ENCODE measurements at regions of chr15 and their contacts with region 1.

Region 1: DNA sequence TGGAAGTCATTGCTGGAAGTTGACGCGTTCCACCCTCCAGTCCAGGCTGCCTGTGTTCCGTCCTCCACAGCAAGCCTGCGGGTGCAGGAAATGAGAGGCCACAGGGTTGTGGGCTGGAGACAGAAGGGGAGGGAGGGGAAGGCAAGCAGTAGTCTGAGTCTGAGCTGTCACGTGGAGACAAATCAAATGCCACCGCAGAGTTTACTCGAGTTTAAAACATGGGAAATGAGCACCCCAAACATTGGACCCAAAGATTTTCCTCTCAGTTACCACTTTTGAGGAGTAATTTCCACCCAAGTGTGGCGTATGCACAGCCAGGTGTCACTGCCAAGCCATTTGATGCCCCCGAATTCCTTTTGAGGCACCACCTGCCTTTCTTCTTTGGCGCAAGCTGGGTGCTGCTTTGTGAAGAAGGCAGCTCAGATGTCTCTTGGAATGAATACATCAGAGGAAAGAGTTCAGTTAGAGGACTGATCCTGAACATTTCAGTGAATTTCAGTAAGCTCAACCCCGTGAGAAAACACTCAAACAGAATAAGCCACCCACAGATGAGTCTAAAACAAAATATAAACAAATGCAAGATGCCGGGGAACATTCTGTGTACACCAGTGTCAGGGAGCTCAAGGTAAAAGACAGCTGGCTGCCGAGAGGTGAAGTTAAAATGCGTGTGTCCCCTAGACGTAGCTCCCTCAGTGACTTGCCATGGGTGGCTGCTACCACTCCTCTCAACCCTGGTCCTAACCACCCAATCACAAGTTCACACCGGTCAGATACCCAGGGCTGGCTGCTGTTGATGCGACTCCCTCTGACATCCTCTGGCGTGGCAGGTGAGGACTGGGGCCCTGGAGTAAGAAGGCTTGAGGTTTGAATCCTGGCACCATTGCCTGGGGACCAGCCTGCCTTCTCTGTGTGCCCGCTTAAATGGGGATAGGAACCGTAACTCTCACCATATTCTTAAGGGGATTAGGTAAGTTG is 203.8 kb downstream of the UACA start:
- DNase-seq: peak; percentile 35 to 83 (median 80)
- ATAC-seq: peak; percentile 88
- H3K4me3 ChIP-seq: peak overlapping the region; percentile 69
- H3K4me3 Mint-ChIP-seq: peak overlapping the region in 1 of 10 donors; percentile 11
- H3K27ac ChIP-seq: peak overlapping the region; percentile 62
- H3K27ac Mint-ChIP-seq: no peak overlapping the region
- H3K4me1 ChIP-seq: peaks cover 31 to 66% of the 10 kb centered on the region in 2 donors
- H3K4me1 Mint-ChIP-seq: peaks cover 4 to 24% (median 14%) of the 10 kb centered on the region in 7 donors
- H3K27me3 ChIP-seq: no peaks in the 10 kb centered on the region
- H3K27me3 Mint-ChIP-seq: peaks cover 0 to 29% (median 0%) of the 10 kb centered on the region in 5 donors

Region 2: GRCh38 chr15:69973102-69973712 is 586.3 kb before region 1 on chr15:
- CTCF ChIA-PET with region 1: no interaction called
- POLR2A ChIA-PET with region 1: no interaction called
- intact Hi-C with region 1: no loop called
- DNase-seq: peak in 1 of 9 donors; percentile 35
- ATAC-seq: no peak
- H3K4me3 ChIP-seq: no peak overlapping the region
- H3K4me3 Mint-ChIP-seq: no peak overlapping the region
- H3K27ac ChIP-seq: no peak overlapping the region
- H3K27ac Mint-ChIP-seq: no peak overlapping the region
- H3K4me1 ChIP-seq: no peaks in the 10 kb centered on the region
- H3K4me1 Mint-ChIP-seq: no peaks in the 10 kb centered on the region
- H3K27me3 ChIP-seq: no peaks in the 10 kb centered on the region
- H3K27me3 Mint-ChIP-seq: peaks cover 5 to 39% (median 36%) of the 10 kb centered on the region in 5 donors

Region 3: DNA sequence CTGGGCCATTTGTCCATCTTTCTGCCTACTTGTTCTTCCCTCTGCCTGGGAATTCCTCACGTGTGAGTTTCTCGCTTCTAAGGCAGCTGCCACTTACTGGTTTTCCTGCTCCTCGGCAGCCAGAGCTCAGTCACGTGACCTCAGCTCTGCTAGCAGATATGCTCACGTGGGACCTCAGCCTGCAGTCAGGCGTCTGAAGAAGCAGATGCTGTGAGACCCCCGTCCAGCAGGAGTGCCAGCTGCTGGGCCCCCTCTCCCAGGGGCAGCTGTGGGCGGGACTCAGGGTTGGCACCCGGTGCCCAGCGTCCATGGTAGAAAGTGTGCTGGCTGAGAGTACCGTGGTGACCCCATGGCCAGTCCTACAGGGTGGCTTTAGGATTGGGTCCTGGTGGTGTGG is 300.5 kb before region 1 on chr15:
- CTCF ChIA-PET with region 1: no interaction called
- POLR2A ChIA-PET with region 1: no interaction called
- intact Hi-C with region 1: loop called in 1 of 2 experiments (anchors 1 kb)
- DNase-seq: peak in 8 of 9 donors; percentile 35 to 61 (median 54)
- ATAC-seq: peak; percentile 58
- H3K4me3 ChIP-seq: peak overlapping the region; percentile 40
- H3K4me3 Mint-ChIP-seq: peak overlapping the region; percentile 79 to 96 (median 84)
- H3K27ac ChIP-seq: peak overlapping the region; percentile 56
- H3K27ac Mint-ChIP-seq: peak overlapping the region; percentile 76 to 95 (median 92)
- H3K4me1 ChIP-seq: peaks cover 29 to 40% of the 10 kb centered on the region in 2 donors
- H3K4me1 Mint-ChIP-seq: peaks cover 46 to 69% (median 51%) of the 10 kb centered on the region in 7 donors
- H3K27me3 ChIP-seq: no peaks in the 10 kb centered on the region
- H3K27me3 Mint-ChIP-seq: peaks cover 0 to 34% (median 0%) of the 10 kb centered on the region in 5 donors

Region 4: GRCh38 chr15:70512772-70513362 is 46.7 kb before region 1 on chr15:
- CTCF ChIA-PET with region 1: no interaction called
- POLR2A ChIA-PET with region 1: no interaction called
- intact Hi-C with region 1: loop called in 1 of 2 experiments (anchors 1 kb)
- DNase-seq: peak; percentile 30 to 72 (median 45)
- ATAC-seq: peak; percentile 79
- H3K4me3 ChIP-seq: no peak overlapping the region
- H3K4me3 Mint-ChIP-seq: no peak overlapping the region
- H3K27ac ChIP-seq: no peak overlapping the region
- H3K27ac Mint-ChIP-seq: peak overlapping the region in 1 of 9 donors; percentile 32
- H3K4me1 ChIP-seq: peaks cover 0 to 10% of the 10 kb centered on the region in 2 donors
- H3K4me1 Mint-ChIP-seq: peaks cover 10 to 38% (median 17%) of the 10 kb centered on the region in 7 donors
- H3K27me3 ChIP-seq: no peaks in the 10 kb centered on the region
- H3K27me3 Mint-ChIP-seq: peaks cover 0 to 28% (median 0%) of the 10 kb centered on the region in 5 donors

Region 5: GRCh38 chr15:70528270-70528706 is 31.3 kb before region 1 on chr15:
- CTCF ChIA-PET with region 1: interaction called, 6 read pairs
- POLR2A ChIA-PET with region 1: interaction called, 96 read pairs
- intact Hi-C with region 1: loop called (anchors 1 to 2 kb)
- DNase-seq: peak in 8 of 9 donors; percentile 62 to 81 (median 77)
- ATAC-seq: peak; percentile 92
- H3K4me3 ChIP-seq: peak overlapping the region; percentile 55
- H3K4me3 Mint-ChIP-seq: peak overlapping the region; percentile 78 to 86 (median 82)
- H3K27ac ChIP-seq: peak overlapping the region; percentile 65
- H3K27ac Mint-ChIP-seq: peak overlapping the region; percentile 87 to 99 (median 95)
- H3K4me1 ChIP-seq: peaks cover 36 to 64% of the 10 kb centered on the region in 2 donors
- H3K4me1 Mint-ChIP-seq: peaks cover 42 to 99% (median 89%) of the 10 kb centered on the region in 7 donors
- H3K27me3 ChIP-seq: no peaks in the 10 kb centered on the region
- H3K27me3 Mint-ChIP-seq: peaks cover 0 to 4% (median 0%) of the 10 kb centered on the region in 5 donors

Region 6: DNA sequence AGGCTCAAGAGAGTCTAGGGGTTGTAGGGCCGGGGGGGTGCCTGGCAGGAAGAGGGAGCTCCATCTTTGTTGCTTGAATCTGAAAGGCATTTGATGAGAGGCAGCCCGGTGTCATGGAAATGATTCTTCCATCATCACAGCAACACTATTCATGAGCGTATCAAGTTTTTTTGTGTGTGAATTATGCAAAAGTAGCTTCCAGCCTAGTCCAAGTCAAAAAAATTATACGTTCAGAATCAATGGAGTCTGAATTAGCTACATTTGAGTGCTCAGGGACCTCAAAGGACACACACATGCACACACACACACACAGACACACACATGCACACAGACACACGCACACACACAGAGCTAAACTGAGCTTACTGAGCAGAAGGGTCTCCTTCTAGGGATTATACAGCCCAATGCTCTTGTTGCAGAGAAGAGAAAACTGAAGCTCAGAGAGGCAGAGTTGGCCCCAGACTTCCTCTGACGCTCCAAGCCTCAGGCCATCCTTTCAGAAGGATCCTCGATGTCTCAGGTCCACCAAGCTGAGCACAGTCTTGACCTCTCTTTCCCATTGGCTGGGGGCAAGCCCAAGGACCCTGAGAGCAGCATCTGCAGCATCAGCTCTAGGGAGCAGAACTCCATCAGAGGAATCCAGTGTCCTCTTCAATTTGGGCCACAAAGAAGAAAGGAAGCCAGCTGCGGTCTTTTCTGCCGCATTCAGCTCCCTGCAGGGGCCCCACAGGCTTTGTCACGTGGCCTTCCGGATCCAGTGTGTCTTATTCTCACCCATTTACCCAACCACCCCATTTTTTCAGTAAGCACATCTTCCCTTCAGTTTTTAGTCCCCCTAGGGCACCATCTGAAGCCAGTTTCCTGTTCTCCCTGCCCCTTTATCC is 24.2 kb before region 1 on chr15:
- CTCF ChIA-PET with region 1: interaction called, 7 read pairs
- POLR2A ChIA-PET with region 1: interaction called, 96 read pairs
- intact Hi-C with region 1: loop called in 1 of 2 experiments (anchors 1 kb)
- DNase-seq: peak; percentile 35 to 82 (median 77)
- ATAC-seq: peak; percentile 86
- H3K4me3 ChIP-seq: peak overlapping the region; percentile 66
- H3K4me3 Mint-ChIP-seq: peak overlapping the region; percentile 83 to 99 (median 92)
- H3K27ac ChIP-seq: peak overlapping the region; percentile 74
- H3K27ac Mint-ChIP-seq: peak overlapping the region; percentile 87 to 97 (median 95)
- H3K4me1 ChIP-seq: peaks cover 33 to 50% of the 10 kb centered on the region in 2 donors
- H3K4me1 Mint-ChIP-seq: peaks cover 44 to 87% (median 75%) of the 10 kb centered on the region in 7 donors
- H3K27me3 ChIP-seq: no peaks in the 10 kb centered on the region
- H3K27me3 Mint-ChIP-seq: peaks cover 0 to 23% (median 0%) of the 10 kb centered on the region in 5 donors

Region 7: DNA sequence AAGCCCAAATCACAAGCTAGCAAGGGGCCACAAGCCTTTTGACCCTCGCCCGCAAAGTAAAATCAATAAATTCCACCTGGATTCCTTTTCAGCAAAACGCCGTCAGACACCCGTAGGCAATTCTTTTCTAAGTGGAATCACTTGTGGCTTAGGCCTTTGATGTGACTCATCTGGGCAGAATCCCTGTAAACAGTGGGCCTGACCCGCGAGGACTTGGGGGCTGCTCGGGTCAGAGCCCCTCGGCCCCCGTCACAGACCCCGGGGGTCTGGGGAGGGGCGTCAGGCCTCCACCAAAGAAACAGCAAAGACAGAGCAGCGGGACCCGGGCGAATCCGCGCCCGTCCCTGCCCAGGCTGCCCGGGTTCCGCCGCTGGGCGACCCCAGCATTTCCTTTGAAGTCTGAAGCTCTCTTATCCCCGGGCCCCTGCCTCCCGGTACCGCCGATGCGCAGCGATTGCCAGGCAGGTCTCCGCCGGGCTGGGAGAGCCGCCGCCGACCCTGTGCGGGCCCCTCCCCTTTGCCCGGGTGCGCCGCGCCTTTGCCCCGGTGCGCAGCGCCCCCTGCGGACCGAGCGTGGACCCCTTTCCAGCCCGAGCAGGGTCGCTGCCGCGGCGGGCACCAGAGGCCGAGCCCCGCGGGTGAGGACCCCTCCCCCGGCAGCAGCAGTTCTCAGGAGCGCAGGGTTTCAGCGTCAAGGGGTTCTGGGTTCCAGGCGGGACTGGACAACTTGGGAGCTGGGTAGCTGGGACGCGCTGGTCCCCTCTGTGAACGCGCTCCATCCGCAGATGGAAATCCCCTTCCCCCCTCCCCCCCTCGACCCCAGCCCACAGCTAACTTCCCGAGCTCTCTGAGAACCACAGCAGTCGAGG is 25.5 kb after region 1 on chr15:
- CTCF ChIA-PET with region 1: interaction called, 4 read pairs
- POLR2A ChIA-PET with region 1: no interaction called
- intact Hi-C with region 1: loop called in 1 of 2 experiments (anchors 1 kb)
- DNase-seq: peak; percentile 35 to 66 (median 52)
- ATAC-seq: peak; percentile 88
- H3K4me3 ChIP-seq: no peak overlapping the region
- H3K4me3 Mint-ChIP-seq: peak overlapping the region in 9 of 10 donors; percentile 42 to 84 (median 71)
- H3K27ac ChIP-seq: no peak overlapping the region
- H3K27ac Mint-ChIP-seq: peak overlapping the region in 1 of 9 donors; percentile 49
- H3K4me1 ChIP-seq: peaks cover 0 to 9% of the 10 kb centered on the region in 2 donors
- H3K4me1 Mint-ChIP-seq: peaks cover 0 to 28% (median 20%) of the 10 kb centered on the region in 7 donors
- H3K27me3 ChIP-seq: no peaks in the 10 kb centered on the region
- H3K27me3 Mint-ChIP-seq: peaks cover 0 to 36% (median 17%) of the 10 kb centered on the region in 5 donors

Region 8: DNA sequence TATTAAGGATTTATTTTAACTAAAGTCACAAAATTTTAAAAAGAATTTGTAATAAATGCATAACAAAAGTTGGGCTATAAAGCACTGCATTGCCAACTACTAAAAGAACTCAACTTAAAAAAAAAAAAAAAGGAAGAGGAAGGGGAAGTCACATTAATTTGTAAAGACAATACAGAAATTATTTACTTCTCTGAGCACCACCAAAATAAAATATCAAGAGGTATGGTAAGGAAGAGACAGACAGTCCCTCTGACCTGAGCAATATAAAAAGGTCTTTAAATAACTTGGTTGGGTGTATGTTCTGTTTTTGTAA is 120.3 kb after region 1 on chr15:
- CTCF ChIA-PET with region 1: no interaction called
- POLR2A ChIA-PET with region 1: no interaction called
- intact Hi-C with region 1: no loop called
- DNase-seq: no peak
- ATAC-seq: no peak
- H3K4me3 ChIP-seq: no peak overlapping the region
- H3K4me3 Mint-ChIP-seq: no peak overlapping the region
- H3K27ac ChIP-seq: no peak overlapping the region
- H3K27ac Mint-ChIP-seq: no peak overlapping the region
- H3K4me1 ChIP-seq: no peaks in the 10 kb centered on the region
- H3K4me1 Mint-ChIP-seq: peaks cover 3 to 10% (median 4%) of the 10 kb centered on the region in 7 donors
- H3K27me3 ChIP-seq: no peaks in the 10 kb centered on the region
- H3K27me3 Mint-ChIP-seq: peaks cover 4 to 62% (median 10%) of the 10 kb centered on the region in 5 donors

Region 9: DNA sequence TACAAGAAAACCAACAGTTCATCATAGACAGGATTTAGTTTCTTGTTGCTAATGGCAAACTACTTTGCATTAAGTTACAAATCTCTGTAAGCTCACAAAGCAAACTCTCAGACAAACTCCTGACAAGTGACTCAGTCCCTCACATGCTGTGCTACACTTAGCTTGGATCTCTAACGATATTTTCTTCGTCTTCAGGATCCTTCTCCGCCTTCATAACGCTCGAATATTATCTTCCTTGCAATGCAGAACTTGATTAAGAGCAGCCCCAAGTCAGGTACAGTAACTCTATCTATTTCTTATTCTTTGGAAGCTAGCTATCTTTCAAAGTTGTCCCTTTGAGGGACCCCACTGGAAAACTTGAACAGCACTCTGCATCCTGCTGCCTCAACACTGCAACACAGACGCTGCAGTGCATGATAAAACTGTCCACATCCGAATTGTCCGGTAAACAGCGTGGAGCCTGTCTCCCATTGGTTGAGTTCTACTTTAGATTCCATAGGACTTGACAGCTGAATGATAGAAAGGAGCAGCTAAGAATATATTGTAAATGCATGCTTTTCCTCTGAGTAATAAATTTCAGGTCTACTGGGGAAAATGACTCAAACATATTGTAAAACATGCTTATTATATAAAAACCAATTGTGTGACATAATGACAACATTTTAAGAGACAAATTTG is 142.5 kb after region 1 on chr15:
- CTCF ChIA-PET with region 1: no interaction called
- POLR2A ChIA-PET with region 1: no interaction called
- intact Hi-C with region 1: no loop called
- DNase-seq: no peak
- ATAC-seq: no peak
- H3K4me3 ChIP-seq: no peak overlapping the region
- H3K4me3 Mint-ChIP-seq: no peak overlapping the region
- H3K27ac ChIP-seq: no peak overlapping the region
- H3K27ac Mint-ChIP-seq: no peak overlapping the region
- H3K4me1 ChIP-seq: no peaks in the 10 kb centered on the region
- H3K4me1 Mint-ChIP-seq: peaks cover 0 to 2% (median 0%) of the 10 kb centered on the region in 7 donors
- H3K27me3 ChIP-seq: no peaks in the 10 kb centered on the region
- H3K27me3 Mint-ChIP-seq: peaks cover 6 to 65% (median 33%) of the 10 kb centered on the region in 5 donors

Region 10: GRCh38 chr15:70722266-70723121 is 162.9 kb after region 1 on chr15:
- CTCF ChIA-PET with region 1: interaction called, 5 read pairs
- POLR2A ChIA-PET with region 1: no interaction called
- intact Hi-C with region 1: loop called in 1 of 2 experiments (anchors 10 kb)
- DNase-seq: peak in 6 of 9 donors; percentile 2 to 42 (median 32)
- ATAC-seq: no peak
- H3K4me3 ChIP-seq: no peak overlapping the region
- H3K4me3 Mint-ChIP-seq: no peak overlapping the region
- H3K27ac ChIP-seq: no peak overlapping the region
- H3K27ac Mint-ChIP-seq: no peak overlapping the region
- H3K4me1 ChIP-seq: no peaks in the 10 kb centered on the region
- H3K4me1 Mint-ChIP-seq: peaks cover 0 to 4% (median 0%) of the 10 kb centered on the region in 7 donors
- H3K27me3 ChIP-seq: peaks cover 0 to 10% of the 10 kb centered on the region in 2 donors
- H3K27me3 Mint-ChIP-seq: peaks cover 0 to 38% (median 12%) of the 10 kb centered on the region in 5 donors